ENCODE measurements at regions of chr4 and their contacts with region 1.

Region 1: DNA sequence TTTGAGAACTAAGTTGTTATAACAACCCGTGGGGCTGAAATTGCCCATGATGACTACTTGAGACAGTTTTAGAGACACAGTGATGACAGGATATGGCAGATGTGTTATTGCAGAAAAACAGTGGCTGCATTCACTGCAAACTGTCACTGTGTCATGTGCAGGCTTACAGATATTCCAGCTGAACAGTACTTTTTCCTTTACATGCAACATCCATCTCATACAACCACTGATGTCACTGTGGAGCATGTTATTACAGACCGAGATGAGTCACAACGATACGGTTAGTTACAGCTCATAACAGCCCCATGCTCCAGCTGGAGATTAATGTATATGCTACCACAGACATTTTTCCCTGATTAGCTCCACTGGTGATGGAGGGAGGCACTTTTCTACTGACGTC is 207.4 kb downstream of the TMA16 start:
- DNase-seq: no peak
- ATAC-seq: peak; percentile 17
- H3K4me3 ChIP-seq: no peak overlapping the region
- H3K4me3 Mint-ChIP-seq: no peak overlapping the region
- H3K27ac ChIP-seq: no peak overlapping the region
- H3K27ac Mint-ChIP-seq: no peak overlapping the region
- H3K4me1 ChIP-seq: no peaks in the 10 kb centered on the region
- H3K4me1 Mint-ChIP-seq: no peaks in the 10 kb centered on the region
- H3K27me3 ChIP-seq: peaks cover 0 to 14% (median 6%) of the 10 kb centered on the region in 4 experiments
- H3K27me3 Mint-ChIP-seq: peaks cover 14% of the 10 kb centered on the region
- CTCF ChIP-seq: no peak

Region 2: GRCh38 chr4:163736876-163737275 is 35.0 kb after region 1 on chr4:
- CTCF ChIA-PET with region 1: no interaction called
- POLR2A ChIA-PET with region 1: no interaction called
- intact Hi-C with region 1: loop called (anchors 5 kb)
- DNase-seq: no peak
- ATAC-seq: no peak
- H3K4me3 ChIP-seq: no peak overlapping the region
- H3K4me3 Mint-ChIP-seq: no peak overlapping the region
- H3K27ac ChIP-seq: no peak overlapping the region
- H3K27ac Mint-ChIP-seq: no peak overlapping the region
- H3K4me1 ChIP-seq: no peaks in the 10 kb centered on the region
- H3K4me1 Mint-ChIP-seq: no peaks in the 10 kb centered on the region
- H3K27me3 ChIP-seq: no peaks in the 10 kb centered on the region
- H3K27me3 Mint-ChIP-seq: no peaks in the 10 kb centered on the region
- CTCF ChIP-seq: no peak